MCF 10A (cell line): ENCODE measurements at regions of chr9 and their contacts with region 1.

Region 1: DNA sequence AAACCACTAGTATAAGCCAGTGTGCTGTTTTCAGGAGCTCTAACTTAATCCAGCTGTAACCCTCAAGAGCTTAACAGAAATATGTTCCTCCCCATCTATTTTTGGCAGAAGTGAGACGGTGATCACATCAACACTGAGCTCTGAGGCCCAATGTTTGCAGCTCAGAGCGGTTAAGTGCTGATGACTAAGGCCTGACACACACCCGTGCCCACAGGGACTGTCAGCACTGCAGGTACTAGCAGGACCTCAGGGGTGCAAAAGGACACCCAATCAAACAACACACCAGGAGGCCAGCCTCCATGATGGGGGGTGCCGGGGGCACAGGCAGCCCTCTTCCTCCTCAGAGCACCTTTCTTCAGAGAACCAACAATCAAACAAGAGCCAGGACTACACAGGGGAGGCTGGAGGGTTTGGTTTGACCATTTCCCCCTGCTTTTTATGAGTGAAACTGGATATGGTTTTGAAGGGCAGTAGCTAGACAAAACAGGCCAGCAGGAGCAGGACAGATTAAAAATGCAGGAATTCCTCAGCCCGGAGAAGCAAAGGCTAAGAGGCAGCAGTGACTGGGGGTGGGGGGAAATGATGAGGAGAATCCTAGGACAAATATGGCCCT is 61.3 kb downstream of the RAPGEF1 start:
- DNase-seq: peak; percentile 96
- H3K4me3 Mint-ChIP-seq: peak overlapping the region; percentile 47
- H3K27ac Mint-ChIP-seq: peak overlapping the region; percentile 90
- H3K4me1 Mint-ChIP-seq: peaks cover 44% of the 10 kb centered on the region
- H3K27me3 Mint-ChIP-seq: no peaks in the 10 kb centered on the region
- CTCF ChIP-seq: no peak

Region 2: DNA sequence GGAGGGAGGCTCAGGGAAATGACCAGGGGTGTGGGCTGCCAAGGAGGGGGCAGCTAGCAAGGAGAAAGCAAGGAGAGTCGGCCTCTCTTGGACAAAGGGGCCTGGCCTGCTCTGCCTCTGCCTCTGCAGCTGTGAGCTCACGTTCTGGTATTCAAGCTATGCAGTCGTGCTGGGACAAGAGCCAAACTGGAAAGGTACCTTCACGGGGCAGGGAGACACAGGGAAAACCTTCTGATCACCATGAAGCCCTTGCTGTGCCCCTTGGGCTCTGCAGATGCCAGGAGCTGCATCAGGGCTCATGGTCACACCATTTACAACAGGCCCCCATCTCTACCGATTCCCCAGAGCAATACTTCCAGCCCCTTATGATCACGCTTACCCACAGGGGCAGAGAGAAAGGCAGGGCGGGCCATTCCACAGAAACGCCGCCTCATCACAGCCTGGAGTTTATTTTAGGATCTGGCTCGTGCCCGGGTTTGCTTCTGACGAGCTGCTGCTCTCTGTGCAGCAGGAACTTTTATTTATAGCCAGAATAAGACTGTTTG is 70.0 kb before region 1 on chr9:
- CTCF ChIA-PET with region 1: interaction called, 6 read pairs
- POLR2A ChIA-PET with region 1: interaction called, 25 read pairs
- intact Hi-C with region 1: no loop called
- DNase-seq: peak; percentile 84
- H3K4me3 Mint-ChIP-seq: peak overlapping the region; percentile 54
- H3K27ac Mint-ChIP-seq: peak overlapping the region; percentile 73
- H3K4me1 Mint-ChIP-seq: peaks cover 29% of the 10 kb centered on the region
- H3K27me3 Mint-ChIP-seq: no peaks in the 10 kb centered on the region
- CTCF ChIP-seq: no peak

Region 3: DNA sequence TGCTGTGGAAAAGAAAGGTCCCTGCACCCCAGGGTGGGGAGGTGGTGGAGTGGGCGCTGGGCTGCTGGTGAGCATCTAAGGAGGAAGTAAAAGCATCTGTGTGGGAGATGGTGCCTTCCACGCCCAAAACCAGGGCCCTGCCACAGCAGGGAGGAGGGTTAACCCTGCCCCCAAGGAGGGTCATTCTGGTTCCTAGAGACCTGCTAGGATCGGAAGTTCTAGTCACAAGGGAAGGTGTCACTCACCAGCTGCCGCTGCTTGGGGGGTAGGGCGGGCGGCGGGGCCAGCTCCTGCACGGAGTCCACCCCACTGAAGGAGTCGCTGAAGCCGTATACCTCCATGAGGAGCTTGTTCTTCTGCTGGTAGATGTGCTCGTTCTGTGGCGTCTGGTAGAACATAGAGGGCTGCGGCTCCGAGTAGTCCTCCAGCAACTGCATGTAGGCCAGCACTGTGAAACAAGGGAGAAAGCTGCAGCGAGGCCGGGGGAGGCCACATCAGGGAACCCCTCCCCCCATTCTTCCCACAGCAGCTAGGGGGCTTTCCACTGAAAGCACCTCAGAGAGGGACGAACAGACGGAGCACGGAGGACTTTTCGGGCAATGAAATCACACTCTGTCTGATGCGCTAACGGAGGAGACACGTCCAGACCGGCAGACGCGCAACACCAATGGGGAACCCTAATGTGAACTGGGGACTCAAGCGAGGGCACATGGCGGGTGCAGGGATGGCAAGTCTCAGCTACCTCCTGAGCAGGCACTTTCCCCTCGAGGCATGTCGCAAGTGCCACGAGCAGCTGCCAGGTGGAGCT is 56.9 kb before region 1 on chr9:
- CTCF ChIA-PET with region 1: no interaction called
- POLR2A ChIA-PET with region 1: no interaction called
- intact Hi-C with region 1: no loop called
- DNase-seq: no peak
- H3K4me3 Mint-ChIP-seq: no peak overlapping the region
- H3K27ac Mint-ChIP-seq: no peak overlapping the region
- H3K4me1 Mint-ChIP-seq: peaks cover 21% of the 10 kb centered on the region
- H3K27me3 Mint-ChIP-seq: no peaks in the 10 kb centered on the region
- CTCF ChIP-seq: no peak

Region 4: DNA sequence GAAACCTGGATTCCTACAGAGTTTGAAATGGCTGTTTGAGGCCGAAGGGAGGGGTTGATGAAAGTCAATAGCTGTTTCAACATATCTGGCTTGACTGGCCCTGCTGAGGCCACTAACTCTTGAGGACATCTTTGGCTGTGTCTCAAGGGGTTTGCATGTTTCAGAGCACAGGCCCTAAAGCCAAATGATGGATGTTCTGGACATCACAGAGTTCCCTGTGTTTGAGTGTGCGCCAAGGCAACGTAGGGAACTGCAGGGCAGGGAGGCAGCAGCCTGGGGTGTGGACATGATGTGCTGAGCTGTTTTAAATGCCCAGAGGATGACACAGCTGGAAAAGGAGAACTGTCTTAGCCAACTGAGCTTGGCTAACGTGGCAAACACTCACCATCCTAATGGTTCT is 28.4 kb before region 1 on chr9:
- CTCF ChIA-PET with region 1: interaction called, 7 read pairs
- POLR2A ChIA-PET with region 1: interaction called, 52 read pairs
- intact Hi-C with region 1: loop called (anchors 1 kb)
- DNase-seq: peak; percentile 83
- H3K4me3 Mint-ChIP-seq: peak overlapping the region; percentile 71
- H3K27ac Mint-ChIP-seq: peak overlapping the region; percentile 99
- H3K4me1 Mint-ChIP-seq: peaks cover 26% of the 10 kb centered on the region
- H3K27me3 Mint-ChIP-seq: no peaks in the 10 kb centered on the region
- CTCF ChIP-seq: no peak

Region 5: DNA sequence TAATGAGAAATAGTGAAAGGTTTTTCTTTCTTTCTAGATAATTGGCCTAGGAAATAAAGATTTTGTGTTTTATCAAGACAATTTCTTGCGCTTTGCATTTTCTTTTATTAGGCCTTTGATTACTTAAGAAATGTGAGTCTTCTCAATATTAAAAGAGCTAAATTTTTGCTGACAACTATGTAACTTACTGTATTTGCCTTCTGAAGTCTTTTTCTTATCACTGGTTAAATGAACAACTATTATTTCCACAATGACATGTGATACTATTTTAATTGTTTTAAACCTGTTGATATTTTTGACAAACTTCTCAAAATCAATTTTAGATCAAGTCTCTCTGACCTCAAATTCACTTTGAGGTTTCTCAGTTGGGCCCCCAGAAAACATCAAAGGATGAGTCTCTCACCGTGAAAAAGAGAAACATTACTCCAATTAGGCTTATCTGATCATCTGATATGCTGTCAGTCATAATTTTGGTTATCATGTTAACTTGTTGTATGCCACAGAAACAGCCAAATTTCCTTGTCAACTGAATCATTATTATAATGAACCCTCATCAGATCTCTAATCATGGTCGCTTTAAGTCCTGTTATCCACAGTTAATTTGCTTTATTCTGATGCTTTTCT is 12.5 kb after region 1 on chr9:
- CTCF ChIA-PET with region 1: interaction called, 4 read pairs
- POLR2A ChIA-PET with region 1: interaction called, 72 read pairs
- intact Hi-C with region 1: no loop called
- DNase-seq: no peak
- H3K4me3 Mint-ChIP-seq: no peak overlapping the region
- H3K27ac Mint-ChIP-seq: no peak overlapping the region
- H3K4me1 Mint-ChIP-seq: peaks cover 17% of the 10 kb centered on the region
- H3K27me3 Mint-ChIP-seq: no peaks in the 10 kb centered on the region
- CTCF ChIP-seq: no peak

Region 6: GRCh38 chr9:131704141-131704983 is 25.8 kb after region 1 on chr9:
- CTCF ChIA-PET with region 1: interaction called, 5 read pairs
- POLR2A ChIA-PET with region 1: interaction called, 47 read pairs
- intact Hi-C with region 1: no loop called
- DNase-seq: peak; percentile 59
- H3K4me3 Mint-ChIP-seq: no peak overlapping the region
- H3K27ac Mint-ChIP-seq: no peak overlapping the region
- H3K4me1 Mint-ChIP-seq: peaks cover 41% of the 10 kb centered on the region
- H3K27me3 Mint-ChIP-seq: no peaks in the 10 kb centered on the region
- CTCF ChIP-seq: no peak

Region 7: DNA sequence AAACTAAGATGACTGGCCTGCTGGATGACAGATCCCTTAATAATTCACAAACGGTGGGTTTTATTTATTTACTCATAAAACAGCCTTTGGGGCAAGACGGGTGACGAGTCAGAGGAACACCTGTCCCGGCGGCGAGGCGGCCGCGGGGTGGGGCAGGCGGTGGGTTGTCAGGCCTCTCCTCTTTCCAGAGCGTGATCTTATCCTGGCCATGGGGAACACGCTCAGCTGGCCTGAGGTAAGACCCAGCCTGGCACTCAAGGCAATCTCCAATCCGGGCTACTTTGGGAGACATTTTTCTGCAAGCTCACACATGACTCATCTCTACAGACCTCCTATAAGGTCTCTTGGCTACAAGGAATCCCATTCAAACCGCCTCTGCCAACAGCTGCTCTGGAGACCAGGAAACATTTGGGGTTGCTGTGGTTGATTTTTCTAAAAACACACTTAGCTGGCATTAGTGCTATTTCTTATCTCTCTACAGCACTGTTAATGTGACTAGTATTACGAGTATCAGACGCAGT is 55.0 kb after region 1 on chr9:
- CTCF ChIA-PET with region 1: interaction called, 12 read pairs
- POLR2A ChIA-PET with region 1: interaction called, 57 read pairs
- intact Hi-C with region 1: no loop called
- DNase-seq: peak; percentile 90
- H3K4me3 Mint-ChIP-seq: peak overlapping the region; percentile 52
- H3K27ac Mint-ChIP-seq: peak overlapping the region; percentile 72
- H3K4me1 Mint-ChIP-seq: peaks cover 56% of the 10 kb centered on the region
- H3K27me3 Mint-ChIP-seq: no peaks in the 10 kb centered on the region
- CTCF ChIP-seq: no peak